Left cardiac atrium (tissue), 4 donors: ENCODE measurements at regions of chr3 and their contacts with region 1.

Region 1: GRCh38 chr3:128133273-128134084 is 9.9 kb upstream of the RUVBL1 start:
- DNase-seq: peak; percentile 38
- ATAC-seq: peak; percentile 35 to 61

Region 2: DNA sequence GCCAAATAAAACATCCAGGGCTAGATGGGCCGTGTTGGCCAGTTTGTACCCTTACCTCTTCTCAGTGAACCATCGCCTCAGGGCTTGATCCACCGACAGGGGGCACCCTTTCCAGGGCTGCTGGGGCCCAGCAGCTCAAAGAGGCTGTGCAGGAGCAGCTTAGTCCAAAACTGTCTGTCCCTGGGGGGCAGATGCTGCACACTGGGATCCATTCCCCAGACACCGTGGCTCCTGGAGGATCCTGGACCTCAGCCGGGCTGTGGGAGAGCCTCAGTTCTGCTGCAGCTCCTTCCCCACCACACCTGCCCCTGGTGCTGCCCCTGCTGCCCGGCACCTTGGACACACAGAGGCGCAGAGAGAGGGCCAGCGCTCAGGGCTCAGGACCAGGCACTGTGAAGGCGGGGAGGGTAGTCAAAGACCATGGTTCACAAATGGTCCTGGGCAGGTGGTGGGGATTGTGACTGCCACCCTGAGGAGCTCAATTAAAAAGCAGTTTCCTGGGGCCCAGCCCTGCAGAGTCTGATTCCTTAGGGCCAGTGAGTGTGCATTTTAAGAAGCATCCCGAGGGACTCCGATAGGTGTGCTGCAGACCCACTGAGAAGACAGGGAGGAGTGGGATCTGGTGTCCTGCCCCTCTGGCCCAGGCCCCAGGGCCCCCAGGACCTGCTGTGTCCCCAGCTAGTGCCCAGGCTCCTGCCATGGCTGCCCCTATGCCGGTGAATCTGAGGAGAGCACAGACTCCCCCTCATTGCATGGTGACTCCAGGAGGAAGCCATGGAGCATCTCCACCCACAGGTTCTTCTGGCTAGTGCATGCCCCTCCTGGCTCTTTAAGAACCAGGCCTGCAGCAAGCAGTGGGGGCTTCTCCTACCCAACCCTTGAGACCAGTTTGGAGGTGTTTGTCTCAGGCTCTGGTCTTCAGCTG is 759.1 kb before region 1 on chr3:
- intact Hi-C with region 1: no loop called
- DNase-seq: no peak
- ATAC-seq: no peak

Region 3: DNA sequence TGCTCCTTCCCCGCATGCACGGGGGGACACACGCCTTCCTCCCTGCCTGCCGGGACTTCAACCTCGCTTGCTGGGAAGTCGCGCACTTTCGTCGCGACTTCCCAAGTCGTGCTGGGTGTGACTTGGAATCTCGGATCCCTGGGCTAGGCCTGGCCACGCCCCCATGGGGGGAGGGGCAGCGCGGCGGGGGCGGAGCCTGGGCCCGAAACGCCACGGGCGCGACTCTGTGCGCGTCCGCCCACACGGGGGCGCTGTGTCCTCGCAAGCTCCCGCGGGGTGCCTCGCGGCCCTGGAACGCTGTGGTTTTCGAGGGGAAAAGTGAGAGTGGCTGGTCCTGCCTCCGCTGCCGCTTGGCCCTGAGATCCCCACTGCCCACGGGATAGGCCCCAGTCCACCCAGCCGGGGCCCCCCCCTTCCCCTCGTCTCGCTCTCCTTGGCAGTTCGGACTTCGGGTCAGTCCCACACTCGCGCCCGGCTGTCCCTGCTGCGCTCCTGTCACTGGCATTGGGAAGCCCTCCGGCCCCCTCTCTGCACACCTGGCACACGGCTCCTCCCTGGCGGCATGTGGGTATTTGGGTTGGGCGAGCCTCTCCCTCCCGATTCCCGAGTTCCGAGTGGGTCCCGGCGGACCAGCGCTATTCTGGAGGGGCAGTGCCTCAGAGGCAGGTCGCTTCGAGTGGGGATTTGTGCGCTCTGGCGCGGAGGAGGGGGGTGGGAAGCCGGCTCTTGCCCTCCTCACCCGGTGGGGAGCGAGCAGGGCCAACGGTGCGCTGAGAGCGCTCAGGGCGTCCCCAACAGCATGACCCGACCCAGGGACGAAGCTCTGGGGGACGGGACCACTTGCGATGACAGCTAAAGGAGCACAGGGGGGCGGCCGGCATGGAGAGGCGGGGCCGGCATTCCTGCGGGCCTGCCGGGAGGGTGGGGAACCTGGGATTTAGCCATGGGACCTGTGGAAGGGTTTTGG is 57.7 kb before region 1 on chr3:
- intact Hi-C with region 1: loop called (anchors 10 kb)
- DNase-seq: peak; percentile 90
- ATAC-seq: peak; percentile 85 to 92

Region 4: DNA sequence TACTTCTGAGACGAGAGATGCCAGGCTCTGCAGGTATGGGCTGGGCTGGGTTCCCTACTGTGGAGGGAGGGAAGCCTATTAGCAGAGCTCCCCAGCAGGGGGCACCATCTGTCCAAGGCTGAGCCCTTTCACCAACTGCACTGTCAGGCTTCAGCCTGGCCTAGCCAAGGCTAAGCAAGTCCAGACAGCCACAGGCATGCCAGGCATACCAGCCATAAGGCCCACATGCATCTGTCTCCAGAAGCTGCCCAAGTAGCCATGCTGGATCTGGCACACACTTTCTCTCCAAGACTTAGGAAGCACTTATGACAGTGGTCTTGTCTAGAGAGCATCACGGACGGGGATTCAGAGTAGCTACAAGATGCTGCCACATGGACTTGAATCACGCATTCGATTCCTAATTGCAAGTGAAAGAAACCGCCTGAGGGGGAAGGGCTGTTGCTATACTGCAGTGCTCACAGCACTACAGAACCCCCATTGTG is 38.2 kb before region 1 on chr3:
- intact Hi-C with region 1: loop called in 1 of 2 experiments (anchors 5 kb)
- DNase-seq: peak; percentile 86
- ATAC-seq: peak; percentile 97 to 98